Activated CD4-positive, alpha-beta memory T cell treated with anti-CD3 and anti-CD28 coated beads for 36 hours (primary cell): ENCODE measurements at regions of chr13 and their contacts with region 1.

Region 1: GRCh38 chr13:41960639-41961465 is at the start of gene VWA8:
- DNase-seq: peak; percentile 89
- H3K4me3 Mint-ChIP-seq: peak within 1 kb of the TSS; percentile 90
- H3K27ac Mint-ChIP-seq: peak within 1 kb of the TSS; percentile 97
- H3K4me1 Mint-ChIP-seq: peaks cover 52% of the 10 kb centered on the region
- H3K27me3 Mint-ChIP-seq: no peaks in the 10 kb centered on the region
- total RNA-seq, gene VWA8: 16.8 to 17.1 TPM

Region 2: DNA sequence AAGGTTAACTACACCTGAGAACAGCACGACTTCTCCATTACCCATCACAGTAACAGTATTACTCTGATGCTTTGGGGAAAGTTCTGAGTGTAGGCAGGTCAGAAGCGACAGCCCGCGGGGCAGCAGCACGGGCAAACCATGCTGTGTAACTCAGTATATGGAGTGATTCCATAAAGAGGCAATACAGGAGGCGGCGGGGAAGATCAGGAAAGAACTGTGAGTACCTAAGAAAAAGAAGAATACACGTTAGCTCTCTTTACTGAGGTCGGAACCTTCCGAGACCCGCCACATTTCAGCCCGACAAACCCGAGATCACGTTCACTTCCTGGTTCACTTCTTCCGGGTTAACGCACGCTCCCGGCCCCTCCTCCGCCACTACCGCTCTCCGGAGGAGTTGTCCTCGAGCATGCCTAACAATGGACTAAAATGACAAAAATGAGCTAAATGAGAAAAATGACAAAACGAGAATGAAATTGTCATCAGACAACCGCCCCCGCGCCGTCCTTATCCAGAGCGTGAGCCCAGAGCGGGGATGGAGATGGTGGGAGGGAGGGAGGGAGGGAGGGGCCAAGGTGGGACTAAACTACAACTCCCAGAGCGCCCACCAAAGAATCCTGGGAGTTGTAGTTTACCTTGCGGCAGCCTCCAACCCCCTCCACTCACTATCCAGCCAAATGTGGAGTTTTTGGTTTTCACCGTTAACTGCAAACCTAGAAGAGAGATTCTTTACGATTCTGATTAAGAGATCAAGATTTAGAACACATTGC is 697.4 kb before region 1 on chr13 and contains the start of gene MTRF1:
- CTCF ChIA-PET with region 1: no interaction called
- POLR2A ChIA-PET with region 1: no interaction called
- intact Hi-C with region 1: loop called (anchors 2 kb)
- DNase-seq: peak; percentile 84
- H3K4me3 Mint-ChIP-seq: peak within 1 kb of the TSS; percentile 90
- H3K27ac Mint-ChIP-seq: peak within 1 kb of the TSS; percentile 96
- H3K4me1 Mint-ChIP-seq: peaks cover 13% of the 10 kb centered on the region
- H3K27me3 Mint-ChIP-seq: no peaks in the 10 kb centered on the region
- total RNA-seq, gene MTRF1: 16.2 to 21.5 TPM

Region 3: GRCh38 chr13:41456768-41457588 is 503.9 kb before region 1 on chr13 and contains the start of gene RGCC:
- CTCF ChIA-PET with region 1: no interaction called
- POLR2A ChIA-PET with region 1: no interaction called
- intact Hi-C with region 1: loop called (anchors 2 kb)
- DNase-seq: peak; percentile 97
- H3K4me3 Mint-ChIP-seq: peak within 1 kb of the TSS; percentile 87
- H3K27ac Mint-ChIP-seq: peak within 1 kb of the TSS; percentile 97
- H3K4me1 Mint-ChIP-seq: peaks cover 41% of the 10 kb centered on the region
- H3K27me3 Mint-ChIP-seq: peaks cover 2% of the 10 kb centered on the region
- total RNA-seq, gene RGCC: 94.8 to 96.8 TPM

Region 4: DNA sequence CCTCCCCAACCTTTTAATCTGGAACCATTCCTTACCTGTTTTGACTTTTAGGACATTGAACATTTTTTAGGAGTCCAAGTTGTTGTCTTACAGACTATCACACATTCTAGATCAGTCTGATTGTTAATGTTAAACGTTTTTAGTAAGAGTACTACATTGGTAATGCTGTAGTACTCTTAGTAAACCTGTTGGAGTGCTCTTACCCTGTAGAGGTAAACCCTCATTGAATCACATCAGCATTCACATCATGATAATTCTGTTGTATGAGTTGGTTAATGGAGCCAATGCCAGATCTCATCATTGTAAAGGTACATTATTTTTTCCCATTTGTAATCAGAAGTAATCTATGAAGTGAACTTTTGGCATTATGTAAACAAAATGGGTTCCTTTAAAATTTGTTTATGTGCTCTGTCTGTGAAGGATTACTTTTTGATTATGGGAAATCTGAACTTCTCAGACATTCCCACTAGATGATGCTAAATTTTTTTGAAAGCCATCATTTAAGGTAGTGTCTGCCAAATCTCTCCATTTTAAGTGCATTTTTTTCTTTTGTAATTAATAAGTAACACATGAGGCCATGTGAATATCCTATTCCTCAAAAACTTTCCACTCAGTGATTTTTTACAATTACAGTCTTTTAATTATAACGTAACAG is 55.1 kb before region 1 on chr13:
- CTCF ChIA-PET with region 1: no interaction called
- POLR2A ChIA-PET with region 1: interaction called, 3 read pairs
- intact Hi-C with region 1: loop called (anchors 1 kb)
- DNase-seq: no peak
- H3K4me3 Mint-ChIP-seq: no peak overlapping the region
- H3K27ac Mint-ChIP-seq: no peak overlapping the region
- H3K4me1 Mint-ChIP-seq: peaks cover 9% of the 10 kb centered on the region
- H3K27me3 Mint-ChIP-seq: no peaks in the 10 kb centered on the region

Region 5: DNA sequence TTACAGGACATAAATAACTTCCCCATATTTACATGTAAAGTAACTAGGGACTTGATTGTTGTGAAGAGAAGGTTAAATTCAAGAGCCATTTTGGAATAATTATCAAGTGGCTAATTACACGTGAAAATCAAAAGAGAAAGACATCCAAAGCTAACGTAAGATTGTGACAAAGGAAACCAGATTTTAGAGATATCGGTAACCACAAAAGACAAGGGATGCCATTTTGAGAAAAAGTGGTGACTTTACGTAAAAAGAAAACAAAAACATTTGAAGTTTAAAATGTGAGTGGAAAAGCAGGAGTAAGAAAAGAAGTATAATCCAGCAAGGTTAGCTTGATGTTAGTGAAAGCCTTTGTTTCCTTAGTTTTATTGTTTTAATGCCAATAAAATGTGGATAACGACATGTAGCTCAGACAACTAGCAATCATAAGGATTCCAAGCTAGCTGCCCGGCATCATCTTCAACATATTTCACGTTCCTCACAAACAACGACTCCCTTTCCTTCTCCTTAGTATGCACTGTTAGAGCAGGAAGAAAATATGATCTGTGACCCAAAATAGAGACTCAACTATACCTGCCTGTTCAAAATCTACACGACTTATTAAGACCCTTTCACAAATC is 11.1 kb after region 1 on chr13:
- CTCF ChIA-PET with region 1: interaction called, 3 read pairs
- POLR2A ChIA-PET with region 1: interaction called, 6 read pairs
- intact Hi-C with region 1: loop called (anchors 1 kb)
- DNase-seq: no peak
- H3K4me3 Mint-ChIP-seq: no peak overlapping the region
- H3K27ac Mint-ChIP-seq: no peak overlapping the region
- H3K4me1 Mint-ChIP-seq: peaks cover 9% of the 10 kb centered on the region
- H3K27me3 Mint-ChIP-seq: no peaks in the 10 kb centered on the region

Region 6: DNA sequence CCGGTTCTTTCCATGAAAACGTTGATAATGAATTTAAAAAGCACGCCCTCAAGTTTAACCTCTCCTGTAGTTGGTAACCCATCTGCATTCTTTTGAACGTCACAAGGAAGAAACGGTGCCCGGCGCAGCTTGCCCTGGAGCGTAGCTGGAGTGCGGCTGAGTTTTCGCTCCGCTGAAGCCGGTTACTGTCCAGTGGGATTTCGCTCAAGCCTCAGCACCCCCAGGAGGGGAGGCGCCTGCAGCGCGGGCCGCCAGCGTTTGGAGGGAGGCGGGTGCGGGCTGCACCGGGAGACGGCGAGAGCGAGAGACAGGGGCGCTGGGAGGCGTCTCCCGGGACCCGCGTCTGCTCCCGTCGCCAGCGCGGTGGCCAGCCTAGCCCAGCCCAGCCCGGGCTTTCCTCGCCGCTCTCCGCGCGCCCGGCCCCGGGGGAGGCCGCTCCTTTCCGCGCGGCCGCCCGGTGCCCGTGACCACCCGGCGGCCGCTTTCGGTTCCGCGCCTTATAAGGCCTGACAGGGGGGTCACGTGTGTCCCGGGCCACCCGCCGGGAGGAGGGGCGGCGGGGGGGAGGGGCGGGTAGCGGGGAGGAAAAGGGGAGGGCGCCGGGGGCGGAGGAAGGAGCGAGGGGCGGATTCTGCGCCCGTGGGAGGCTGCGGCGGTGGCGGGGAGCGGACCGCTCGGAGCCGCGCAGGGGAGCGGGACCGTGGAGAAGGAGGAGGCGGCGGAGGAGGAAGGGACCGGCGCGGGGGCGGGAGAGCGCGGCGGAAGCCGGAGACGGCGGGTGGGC is 79.3 kb after region 1 on chr13:
- CTCF ChIA-PET with region 1: no interaction called
- POLR2A ChIA-PET with region 1: interaction called, 4 read pairs
- intact Hi-C with region 1: loop called (anchors 1 kb)
- DNase-seq: peak; percentile 91
- H3K4me3 Mint-ChIP-seq: peak overlapping the region; percentile 81
- H3K27ac Mint-ChIP-seq: peak overlapping the region; percentile 68
- H3K4me1 Mint-ChIP-seq: peaks cover 18% of the 10 kb centered on the region
- H3K27me3 Mint-ChIP-seq: peaks cover 5% of the 10 kb centered on the region

Region 7: GRCh38 chr13:42271337-42272114 is 310.7 kb after region 1 on chr13:
- CTCF ChIA-PET with region 1: no interaction called
- POLR2A ChIA-PET with region 1: no interaction called
- intact Hi-C with region 1: loop called (anchors 5 kb)
- DNase-seq: peak; percentile 96
- H3K4me3 Mint-ChIP-seq: peak overlapping the region; percentile 98
- H3K27ac Mint-ChIP-seq: peak overlapping the region; percentile 98
- H3K4me1 Mint-ChIP-seq: peaks cover 43% of the 10 kb centered on the region
- H3K27me3 Mint-ChIP-seq: no peaks in the 10 kb centered on the region